MCF 10A (cell line): ENCODE measurements at regions of chr18 and their contacts with region 1.

Region 1: GRCh38 chr18:32271672-32272208 is 81.9 kb downstream of the MEP1B start:
- DNase-seq: peak; percentile 57
- H3K4me3 Mint-ChIP-seq: no peak overlapping the region
- H3K27ac Mint-ChIP-seq: no peak overlapping the region
- H3K4me1 Mint-ChIP-seq: peaks cover 12% of the 10 kb centered on the region
- H3K27me3 Mint-ChIP-seq: no peaks in the 10 kb centered on the region
- CTCF ChIP-seq: peak; percentile 76

Region 2: GRCh38 chr18:32018331-32019250 is 253.1 kb before region 1 on chr18 and contains the start of gene RNF125:
- CTCF ChIA-PET with region 1: no interaction called
- POLR2A ChIA-PET with region 1: no interaction called
- intact Hi-C with region 1: no loop called
- DNase-seq: peak; percentile 89
- H3K4me3 Mint-ChIP-seq: peak within 1 kb of the TSS; percentile 88
- H3K27ac Mint-ChIP-seq: peak within 1 kb of the TSS; percentile 27
- H3K4me1 Mint-ChIP-seq: peaks cover 11% of the 10 kb centered on the region
- H3K27me3 Mint-ChIP-seq: no peaks in the 10 kb centered on the region
- CTCF ChIP-seq: no peak
- total RNA-seq, gene RNF125: 3.5 and 6.2 TPM in 2 replicates

Region 3: DNA sequence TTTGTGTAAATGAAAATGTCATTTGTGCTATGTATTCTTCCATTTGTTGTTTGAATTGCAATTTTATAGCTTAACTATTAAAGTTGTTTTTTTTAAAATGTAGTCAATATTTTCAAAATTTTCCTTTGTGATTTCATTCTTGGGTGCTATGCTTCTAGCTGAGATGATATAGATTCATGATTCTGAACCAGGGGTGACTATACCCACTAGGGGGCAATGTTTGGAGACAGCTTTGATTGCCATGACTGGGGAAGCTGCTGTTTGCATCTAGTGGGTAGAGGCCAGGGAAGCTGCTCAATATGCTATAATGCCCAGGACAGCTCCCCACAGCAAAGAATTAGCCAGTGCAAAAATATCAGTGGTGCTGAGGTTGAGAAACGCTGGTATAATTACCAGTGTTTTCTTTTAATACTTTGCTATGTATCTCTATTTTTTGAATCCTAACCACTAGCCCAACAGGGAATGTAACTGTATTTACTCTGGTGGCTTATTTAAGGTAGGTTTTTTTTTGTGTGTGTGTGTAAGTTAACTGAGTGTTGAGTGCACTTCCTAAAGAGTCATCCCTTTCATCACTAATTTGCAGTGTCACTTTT is 17.8 kb after region 1 on chr18:
- CTCF ChIA-PET with region 1: interaction called, 100 read pairs
- POLR2A ChIA-PET with region 1: interaction called, 9 read pairs
- intact Hi-C with region 1: no loop called
- DNase-seq: peak; percentile 82
- H3K4me3 Mint-ChIP-seq: no peak overlapping the region
- H3K27ac Mint-ChIP-seq: no peak overlapping the region
- H3K4me1 Mint-ChIP-seq: peaks cover 26% of the 10 kb centered on the region
- H3K27me3 Mint-ChIP-seq: no peaks in the 10 kb centered on the region
- CTCF ChIP-seq: peak; percentile 59

Region 4: GRCh38 chr18:32301976-32302743 is 30.4 kb after region 1 on chr18:
- CTCF ChIA-PET with region 1: interaction called, 14 read pairs
- POLR2A ChIA-PET with region 1: interaction called, 3 read pairs
- intact Hi-C with region 1: no loop called
- DNase-seq: peak; percentile 77
- H3K4me3 Mint-ChIP-seq: no peak overlapping the region
- H3K27ac Mint-ChIP-seq: peak overlapping the region; percentile 78
- H3K4me1 Mint-ChIP-seq: peaks cover 32% of the 10 kb centered on the region
- H3K27me3 Mint-ChIP-seq: no peaks in the 10 kb centered on the region
- CTCF ChIP-seq: no peak

Region 5: DNA sequence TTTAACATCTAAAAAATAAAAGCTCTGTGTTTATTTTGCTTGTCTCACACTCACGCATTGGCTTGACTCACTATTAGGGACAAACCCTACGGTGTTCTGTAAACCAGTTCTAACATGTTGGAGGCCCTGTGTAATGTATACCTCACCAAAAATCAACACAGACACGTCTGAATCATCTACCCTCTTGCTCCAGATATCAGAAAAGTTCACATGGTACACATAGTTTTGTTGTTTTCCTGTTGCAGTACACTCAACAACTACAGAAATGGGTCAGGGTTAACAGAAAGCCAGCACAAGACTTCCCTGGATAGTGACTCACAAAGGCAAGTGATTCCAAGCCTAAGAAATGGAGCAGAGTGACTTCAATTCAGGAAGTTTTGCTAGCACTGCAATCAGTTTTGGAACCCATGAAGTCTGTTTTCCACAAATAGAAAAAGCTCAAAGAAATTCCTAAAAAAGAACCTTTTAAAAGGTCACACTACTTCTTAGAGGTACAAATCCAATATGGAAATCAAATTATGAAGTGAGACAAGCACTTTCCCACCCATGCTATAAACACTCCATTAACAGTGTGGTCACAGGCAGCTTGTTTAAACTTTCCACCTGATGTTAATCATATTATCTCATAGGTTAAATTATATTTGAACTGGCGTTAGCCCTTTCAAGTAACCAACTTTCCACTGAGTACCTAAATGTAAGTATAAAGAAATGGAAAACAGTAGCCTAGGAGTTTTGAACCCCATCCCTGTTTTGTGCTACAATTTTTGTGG is 111.5 kb after region 1 on chr18:
- CTCF ChIA-PET with region 1: interaction called, 17 read pairs
- POLR2A ChIA-PET with region 1: interaction called, 6 read pairs
- intact Hi-C with region 1: loop called (anchors 1 kb)
- DNase-seq: peak; percentile 97
- H3K4me3 Mint-ChIP-seq: peak overlapping the region; percentile 40
- H3K27ac Mint-ChIP-seq: peak overlapping the region; percentile 98
- H3K4me1 Mint-ChIP-seq: peaks cover 69% of the 10 kb centered on the region
- H3K27me3 Mint-ChIP-seq: no peaks in the 10 kb centered on the region
- CTCF ChIP-seq: no peak

Region 6: GRCh38 chr18:32439802-32440201 is 168.1 kb after region 1 on chr18:
- CTCF ChIA-PET with region 1: no interaction called
- POLR2A ChIA-PET with region 1: no interaction called
- intact Hi-C with region 1: no loop called
- DNase-seq: peak; percentile 34
- H3K4me3 Mint-ChIP-seq: no peak overlapping the region
- H3K27ac Mint-ChIP-seq: no peak overlapping the region
- H3K4me1 Mint-ChIP-seq: peaks cover 35% of the 10 kb centered on the region
- H3K27me3 Mint-ChIP-seq: no peaks in the 10 kb centered on the region
- CTCF ChIP-seq: peak; percentile 12

Region 7: DNA sequence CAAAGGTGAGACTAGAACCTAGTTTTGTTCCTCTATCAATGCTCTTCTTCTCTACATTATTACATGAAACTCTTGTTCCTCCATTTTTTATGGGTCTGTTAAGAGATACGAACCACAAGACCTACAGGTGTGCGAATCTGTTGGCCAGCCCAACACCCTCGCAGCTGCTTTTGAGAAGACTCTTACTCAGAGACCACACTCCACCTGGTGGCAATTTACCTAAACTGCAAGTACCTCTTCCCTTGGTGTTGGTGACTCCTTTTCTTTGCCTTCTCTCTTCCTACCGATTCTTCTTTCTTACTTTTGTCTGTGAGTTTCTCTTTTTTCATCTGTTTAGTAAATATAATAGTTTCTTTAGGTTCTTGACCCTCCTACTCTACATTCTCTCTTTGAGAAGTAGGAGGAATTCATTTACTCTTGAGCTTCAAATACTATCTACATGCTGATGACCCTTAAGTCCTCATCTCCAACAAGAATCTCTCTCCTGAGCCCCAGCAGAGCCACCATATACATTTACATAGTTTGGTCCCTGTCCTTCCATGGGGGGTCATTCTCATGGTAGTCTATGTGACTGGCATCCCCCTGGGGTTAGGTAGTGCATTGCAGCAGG is 280.8 kb after region 1 on chr18:
- CTCF ChIA-PET with region 1: interaction called, 171 read pairs
- POLR2A ChIA-PET with region 1: interaction called, 7 read pairs
- intact Hi-C with region 1: loop called (anchors 1 kb)
- DNase-seq: peak; percentile 81
- H3K4me3 Mint-ChIP-seq: no peak overlapping the region
- H3K27ac Mint-ChIP-seq: no peak overlapping the region
- H3K4me1 Mint-ChIP-seq: peaks cover 6% of the 10 kb centered on the region
- H3K27me3 Mint-ChIP-seq: no peaks in the 10 kb centered on the region
- CTCF ChIP-seq: peak; percentile 57

Region 8: DNA sequence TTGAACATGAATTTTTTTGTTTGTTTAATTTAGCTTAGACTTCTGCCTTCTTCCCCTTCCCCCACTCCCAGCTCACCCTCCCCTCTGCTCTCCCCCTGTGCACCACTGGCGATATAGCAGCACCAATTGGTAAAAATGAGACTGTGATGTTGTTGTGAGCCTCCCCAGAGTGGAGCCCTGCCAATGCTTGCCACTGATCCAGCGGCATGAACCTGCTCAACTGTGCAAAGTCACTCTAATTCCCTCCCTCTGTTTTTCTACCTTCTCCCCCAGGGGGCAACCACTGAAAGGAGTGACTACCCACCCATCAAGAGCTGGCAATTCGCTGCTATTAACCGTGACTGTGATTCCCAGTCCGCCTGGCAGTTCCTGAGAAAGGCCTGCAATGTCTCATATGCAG is 470.8 kb after region 1 on chr18:
- CTCF ChIA-PET with region 1: no interaction called
- POLR2A ChIA-PET with region 1: no interaction called
- intact Hi-C with region 1: no loop called
- DNase-seq: no peak
- H3K4me3 Mint-ChIP-seq: no peak overlapping the region
- H3K27ac Mint-ChIP-seq: no peak overlapping the region
- H3K4me1 Mint-ChIP-seq: no peaks in the 10 kb centered on the region
- H3K27me3 Mint-ChIP-seq: peaks cover 66% of the 10 kb centered on the region
- CTCF ChIP-seq: no peak